Endothelial cell of umbilical vein (primary cell): ENCODE measurements at regions of chr4 and their contacts with region 1.

Region 1: DNA sequence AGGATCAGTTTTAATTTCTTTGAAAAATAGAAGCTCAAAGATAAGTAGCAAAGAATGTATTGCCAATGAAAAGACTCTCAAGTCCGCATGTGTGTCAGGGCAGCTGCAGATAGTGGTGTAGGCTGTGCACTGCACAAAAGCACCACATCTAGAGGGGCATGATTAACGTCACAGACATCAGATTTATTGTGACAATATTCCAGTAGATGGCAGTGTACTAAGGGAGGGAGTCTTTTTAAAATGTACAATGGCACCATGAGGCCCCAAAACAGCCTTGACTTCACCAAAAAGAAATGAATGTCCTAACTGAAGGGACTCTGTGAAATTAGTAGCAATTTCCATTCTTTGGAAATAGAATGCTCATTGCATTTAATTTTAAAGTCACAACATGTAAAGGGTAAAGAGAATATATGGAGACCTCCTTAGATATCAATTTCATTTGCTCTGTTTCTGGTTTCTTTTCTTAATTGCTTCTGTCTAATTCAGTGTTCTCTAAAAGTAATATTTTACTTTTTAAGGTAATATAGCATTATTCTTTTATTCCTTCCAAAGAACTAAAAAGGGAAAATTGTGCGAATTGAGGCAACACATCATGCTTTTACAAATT is 98.4 kb downstream of the ZNF827 start:
- DNase-seq: peak; percentile 67
- H3K4me3 ChIP-seq: no peak overlapping the region
- H3K27ac ChIP-seq: no peak overlapping the region
- H3K4me1 ChIP-seq: peaks cover 28% of the 10 kb centered on the region
- H3K27me3 ChIP-seq: no peaks in the 10 kb centered on the region
- CTCF ChIP-seq: peak; percentile 33 to 48
- POLR2A ChIP-seq: no peak

Region 2: DNA sequence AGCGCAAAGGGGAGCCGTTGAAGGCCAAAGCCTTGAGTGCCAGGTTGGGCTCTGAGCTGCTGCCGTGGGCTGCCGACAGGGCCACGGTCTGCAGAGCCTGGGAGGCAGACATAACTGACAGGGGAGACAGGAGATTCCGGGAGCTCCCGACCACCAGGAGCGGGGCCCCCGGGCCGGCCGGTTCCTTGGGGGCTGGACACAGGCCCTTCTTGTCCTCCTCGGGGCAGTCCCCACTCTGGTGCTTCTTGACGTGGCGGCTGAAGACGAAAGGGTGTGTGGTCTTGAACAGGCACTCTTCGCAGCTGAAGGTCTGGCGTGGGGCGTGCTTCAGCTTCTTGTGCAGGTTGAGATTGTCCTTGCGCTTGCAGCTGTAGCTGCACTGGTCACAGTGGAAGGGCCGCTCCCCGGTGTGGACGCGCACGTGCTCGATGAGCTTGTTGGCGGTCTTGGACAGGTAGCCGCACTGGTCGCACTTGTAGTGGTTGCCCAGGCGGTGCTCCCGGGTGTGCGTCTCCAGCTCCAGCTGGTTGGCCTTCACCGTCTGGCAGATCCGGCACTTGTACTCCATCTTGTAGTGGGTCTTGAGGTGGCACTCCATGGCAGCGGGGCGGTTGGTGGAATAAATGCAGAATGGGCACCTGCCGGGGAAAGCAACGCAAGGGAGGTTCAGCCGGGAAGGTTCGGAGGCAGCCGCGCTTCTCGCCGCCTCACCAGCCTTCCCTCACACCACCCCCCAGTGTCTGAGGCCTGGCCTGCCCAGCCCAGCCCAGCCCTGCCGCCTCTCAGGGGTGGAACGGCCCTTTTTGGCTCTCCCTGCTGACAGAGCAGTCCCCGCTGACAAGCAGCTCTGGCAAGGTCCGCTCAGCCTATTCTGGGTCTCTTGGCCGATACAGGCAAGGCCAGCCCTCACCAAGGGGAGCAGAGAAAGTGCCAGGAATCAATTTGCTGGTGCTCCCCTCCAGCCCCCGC is 79.0 kb before region 1 on chr4:
- CTCF ChIA-PET with region 1: no interaction called
- POLR2A ChIA-PET with region 1: no interaction called
- dilution Hi-C with region 1: no loop called
- intact Hi-C with region 1: no loop called
- DNase-seq: no peak
- H3K4me3 ChIP-seq: no peak overlapping the region
- H3K27ac ChIP-seq: no peak overlapping the region
- H3K4me1 ChIP-seq: no peaks in the 10 kb centered on the region
- H3K27me3 ChIP-seq: no peaks in the 10 kb centered on the region
- CTCF ChIP-seq: no peak
- POLR2A ChIP-seq: no peak

Region 3: GRCh38 chr4:145779319-145779801 is 60.9 kb before region 1 on chr4:
- CTCF ChIA-PET with region 1: interaction called, 3 read pairs
- POLR2A ChIA-PET with region 1: no interaction called
- dilution Hi-C with region 1: no loop called
- intact Hi-C with region 1: loop called (anchors 1 kb)
- DNase-seq: peak; percentile 28
- H3K4me3 ChIP-seq: no peak overlapping the region
- H3K27ac ChIP-seq: peak overlapping the region; percentile 54
- H3K4me1 ChIP-seq: peaks cover 36% of the 10 kb centered on the region
- H3K27me3 ChIP-seq: no peaks in the 10 kb centered on the region
- CTCF ChIP-seq: no peak
- POLR2A ChIP-seq: no peak

Region 4: DNA sequence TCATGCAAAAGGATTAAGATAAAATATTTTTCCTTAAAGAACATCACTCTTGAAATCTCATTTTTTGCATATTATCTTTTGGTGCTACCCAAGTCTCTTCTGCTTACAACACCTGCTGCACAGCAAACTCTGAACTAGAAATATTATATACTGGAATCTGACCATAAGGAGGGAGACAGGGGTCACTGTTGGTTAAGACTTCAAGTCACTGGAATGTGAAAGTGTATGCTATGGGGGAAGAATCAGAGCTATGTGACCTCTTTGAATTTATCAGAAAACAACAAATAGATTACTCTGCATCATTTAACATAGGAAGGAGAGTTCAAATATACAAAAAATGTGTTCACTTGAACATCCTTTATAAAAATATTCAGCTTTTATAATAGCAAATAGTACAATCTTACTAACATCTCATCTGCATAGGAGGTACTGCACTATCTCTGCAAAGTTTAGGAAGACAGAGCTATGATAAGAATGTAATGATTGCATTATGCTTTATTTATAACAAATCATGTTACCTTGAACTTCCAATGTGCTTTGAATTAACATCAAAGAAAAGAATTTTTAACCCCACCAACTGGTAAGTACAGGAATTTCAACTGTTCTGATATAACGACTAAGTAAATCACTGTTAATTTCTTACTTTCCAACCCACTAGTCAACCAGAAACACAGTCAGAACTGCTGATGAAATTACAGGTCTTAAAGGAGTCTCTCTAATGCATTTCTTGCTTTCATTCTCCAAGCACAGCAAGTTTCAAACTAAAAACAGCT is 28.6 kb after region 1 on chr4:
- CTCF ChIA-PET with region 1: interaction called, 13 read pairs
- POLR2A ChIA-PET with region 1: no interaction called
- dilution Hi-C with region 1: no loop called
- intact Hi-C with region 1: no loop called
- DNase-seq: peak; percentile 37
- H3K4me3 ChIP-seq: no peak overlapping the region
- H3K27ac ChIP-seq: no peak overlapping the region
- H3K4me1 ChIP-seq: peaks cover 6% of the 10 kb centered on the region
- H3K27me3 ChIP-seq: no peaks in the 10 kb centered on the region
- CTCF ChIP-seq: no peak
- POLR2A ChIP-seq: no peak

Region 5: DNA sequence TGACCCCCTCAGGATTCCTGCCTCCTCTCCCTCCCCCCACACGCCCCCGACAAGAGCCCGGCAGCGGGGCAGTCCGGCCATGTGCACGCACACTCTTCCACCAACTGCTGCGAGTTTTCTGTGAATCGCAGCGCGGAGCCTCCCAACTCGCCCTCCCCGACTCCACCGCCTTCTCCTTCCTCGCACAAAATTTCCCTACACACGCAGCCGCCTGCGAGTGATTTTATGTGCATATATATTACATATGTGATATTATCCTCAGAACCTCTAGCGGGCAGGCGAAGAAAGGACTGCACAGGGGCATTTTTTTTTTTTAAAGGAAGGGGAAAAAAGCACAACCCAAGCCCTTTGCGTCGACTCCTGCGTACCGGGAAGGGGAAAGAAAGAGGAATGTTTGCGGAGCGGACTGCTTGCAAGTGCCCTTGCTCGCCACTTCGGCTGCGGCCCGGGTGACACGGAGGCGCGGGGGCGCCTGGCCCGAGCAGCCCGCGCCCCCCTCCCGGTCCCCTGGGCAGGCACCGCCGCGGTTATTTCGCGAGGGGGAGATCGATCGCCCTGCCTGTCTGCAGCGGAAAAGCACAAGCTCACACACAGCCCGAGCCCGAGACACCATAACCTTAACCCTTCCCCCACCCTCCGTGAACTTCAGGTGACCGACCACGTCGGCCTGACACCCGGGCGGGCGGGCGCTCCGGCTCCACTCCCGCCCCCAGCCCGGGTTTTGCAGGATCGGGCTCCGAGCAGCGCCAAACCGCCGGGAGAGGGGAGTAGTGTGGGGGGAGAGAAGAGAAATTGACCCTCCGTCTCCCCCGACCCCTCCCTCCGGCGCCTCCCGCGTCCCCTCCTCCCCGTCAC is 96.1 kb after region 1 on chr4:
- CTCF ChIA-PET with region 1: interaction called, 3 read pairs
- POLR2A ChIA-PET with region 1: no interaction called
- dilution Hi-C with region 1: no loop called
- intact Hi-C with region 1: loop called (anchors 1 kb)
- DNase-seq: peak; percentile 79
- H3K4me3 ChIP-seq: peak overlapping the region; percentile 62 to 96 (median 81)
- H3K27ac ChIP-seq: peak overlapping the region; percentile 71
- H3K4me1 ChIP-seq: peaks cover 22% of the 10 kb centered on the region
- H3K27me3 ChIP-seq: no peaks in the 10 kb centered on the region
- CTCF ChIP-seq: peak in 1 of 2 donors; percentile 28
- POLR2A ChIP-seq: no peak

Region 6: DNA sequence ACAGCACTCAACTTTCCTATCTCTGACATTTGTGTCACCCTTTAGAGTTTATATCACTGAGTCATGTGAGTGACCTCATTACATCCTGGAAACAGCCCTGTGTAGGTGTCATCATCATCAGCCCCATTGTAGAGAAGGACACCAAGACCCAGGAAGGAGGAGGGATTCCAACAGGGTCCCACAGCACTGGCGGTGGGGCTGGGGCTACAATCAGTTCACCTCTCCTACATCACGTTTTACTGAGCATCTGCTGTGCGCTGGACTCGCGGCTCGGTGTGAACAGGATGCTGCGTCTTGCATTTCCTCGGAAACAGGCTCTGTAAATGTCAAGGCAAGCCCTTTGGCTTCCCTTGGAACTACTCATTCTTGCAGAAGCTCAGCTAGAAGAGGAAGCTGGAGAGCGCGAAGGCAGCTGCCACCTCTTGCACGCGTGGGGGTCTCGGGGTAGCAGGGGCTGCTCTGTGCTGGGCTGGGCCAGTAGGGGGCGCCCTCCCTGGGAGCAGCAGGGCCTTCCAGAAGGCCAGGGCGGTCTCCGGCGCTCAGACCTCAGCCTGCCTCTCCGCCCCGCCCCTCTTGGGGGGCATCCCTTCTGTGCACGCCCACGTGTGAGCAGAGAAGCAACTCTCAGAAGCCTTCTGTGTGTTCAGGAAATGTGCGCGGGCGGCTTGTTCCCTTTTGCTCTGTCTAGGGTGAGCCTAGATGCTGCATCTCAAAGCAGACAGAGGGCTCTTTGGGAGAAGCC is 403.0 kb after region 1 on chr4:
- CTCF ChIA-PET with region 1: no interaction called
- POLR2A ChIA-PET with region 1: no interaction called
- dilution Hi-C with region 1: no loop called
- intact Hi-C with region 1: loop called (anchors 2 kb)
- DNase-seq: peak; percentile 37
- H3K4me3 ChIP-seq: no peak overlapping the region
- H3K27ac ChIP-seq: peak overlapping the region; percentile 97
- H3K4me1 ChIP-seq: peaks cover 23% of the 10 kb centered on the region
- H3K27me3 ChIP-seq: no peaks in the 10 kb centered on the region
- CTCF ChIP-seq: peak; percentile 44 to 53
- POLR2A ChIP-seq: no peak